ENCODE measurements at regions of chr6 and their contacts with region 1.

Region 1: GRCh38 chr6:113564371-113565161 is 292.6 kb upstream of the MARCKS start:
- DNase-seq: peak; percentile 92
- ATAC-seq: peak; percentile 83
- H3K4me3 ChIP-seq: 0 out of 2 replicates have a peak overlapping the region, but pooled peaks have one; percentile 0
- H3K27ac ChIP-seq: peak overlapping the region; percentile 74
- H3K4me1 ChIP-seq: peaks cover 4% of the 10 kb centered on the region
- H3K27me3 ChIP-seq: no peaks in the 10 kb centered on the region
- CTCF ChIP-seq: no peak
- POLR2A ChIP-seq: no peak
- RAD21 ChIP-seq: no peak; the same call in 1 of the 2 replicates

Region 2: DNA sequence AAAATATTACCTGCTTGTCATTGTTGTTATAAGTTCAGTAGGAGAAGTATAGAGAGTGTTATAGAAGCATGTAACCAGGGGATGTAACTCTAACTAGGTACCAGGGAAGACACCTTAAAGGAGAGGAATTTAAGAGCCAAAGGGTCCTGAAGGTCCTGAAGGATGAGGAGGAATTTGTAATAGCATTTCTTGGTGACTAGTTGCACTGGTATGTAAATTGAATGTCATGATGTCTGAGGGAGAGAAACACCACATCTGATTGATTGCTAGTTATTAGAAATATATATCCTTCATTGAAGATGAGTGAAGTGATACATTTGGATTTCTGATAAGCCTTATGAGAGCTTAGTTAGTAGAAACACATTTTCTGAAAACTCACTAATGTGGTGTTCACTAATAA is 573.6 kb before region 1 on chr6:
- CTCF ChIA-PET with region 1: no interaction called
- POLR2A ChIA-PET with region 1: no interaction called
- dilution Hi-C with region 1: no loop called
- in situ Hi-C with region 1: no loop called
- intact Hi-C with region 1: no loop called
- DNase-seq: peak; percentile 44
- ATAC-seq: peak; percentile 42
- H3K4me3 ChIP-seq: no peak overlapping the region
- H3K27ac ChIP-seq: no peak overlapping the region
- H3K4me1 ChIP-seq: no peaks in the 10 kb centered on the region
- H3K27me3 ChIP-seq: no peaks in the 10 kb centered on the region
- CTCF ChIP-seq: no peak
- POLR2A ChIP-seq: no peak
- RAD21 ChIP-seq: no peak

Region 3: GRCh38 chr6:113433335-113433991 is 131.1 kb before region 1 on chr6:
- CTCF ChIA-PET with region 1: no interaction called
- POLR2A ChIA-PET with region 1: no interaction called
- dilution Hi-C with region 1: no loop called
- in situ Hi-C with region 1: no loop called
- intact Hi-C with region 1: loop called (anchors 2 kb)
- DNase-seq: peak; percentile 83
- ATAC-seq: peak; percentile 75
- H3K4me3 ChIP-seq: no peak overlapping the region
- H3K27ac ChIP-seq: peak overlapping the region; percentile 56; the same call in 1 of the 2 replicates
- H3K4me1 ChIP-seq: peaks cover 8% of the 10 kb centered on the region
- H3K27me3 ChIP-seq: no peaks in the 10 kb centered on the region
- CTCF ChIP-seq: no peak
- POLR2A ChIP-seq: no peak
- RAD21 ChIP-seq: no peak

Region 4: GRCh38 chr6:113530803-113531202 is 33.8 kb before region 1 on chr6:
- CTCF ChIA-PET with region 1: no interaction called
- POLR2A ChIA-PET with region 1: no interaction called
- dilution Hi-C with region 1: no loop called
- in situ Hi-C with region 1: no loop called
- intact Hi-C with region 1: no loop called
- DNase-seq: peak; percentile 92
- ATAC-seq: peak; percentile 99
- H3K4me3 ChIP-seq: no peak overlapping the region
- H3K27ac ChIP-seq: no peak overlapping the region
- H3K4me1 ChIP-seq: no peaks in the 10 kb centered on the region
- H3K27me3 ChIP-seq: no peaks in the 10 kb centered on the region
- CTCF ChIP-seq: no peak
- POLR2A ChIP-seq: no peak
- RAD21 ChIP-seq: no peak

Region 5: GRCh38 chr6:113591896-113592827 is 27.6 kb after region 1 on chr6:
- CTCF ChIA-PET with region 1: no interaction called
- POLR2A ChIA-PET with region 1: no interaction called
- dilution Hi-C with region 1: no loop called
- in situ Hi-C with region 1: no loop called
- intact Hi-C with region 1: no loop called
- DNase-seq: peak; percentile 31
- ATAC-seq: no peak
- H3K4me3 ChIP-seq: no peak overlapping the region
- H3K27ac ChIP-seq: no peak overlapping the region
- H3K4me1 ChIP-seq: peaks cover 13% of the 10 kb centered on the region
- H3K27me3 ChIP-seq: no peaks in the 10 kb centered on the region; the same call in 1 of the 2 replicates
- CTCF ChIP-seq: no peak
- POLR2A ChIP-seq: no peak
- RAD21 ChIP-seq: no peak

Region 6: DNA sequence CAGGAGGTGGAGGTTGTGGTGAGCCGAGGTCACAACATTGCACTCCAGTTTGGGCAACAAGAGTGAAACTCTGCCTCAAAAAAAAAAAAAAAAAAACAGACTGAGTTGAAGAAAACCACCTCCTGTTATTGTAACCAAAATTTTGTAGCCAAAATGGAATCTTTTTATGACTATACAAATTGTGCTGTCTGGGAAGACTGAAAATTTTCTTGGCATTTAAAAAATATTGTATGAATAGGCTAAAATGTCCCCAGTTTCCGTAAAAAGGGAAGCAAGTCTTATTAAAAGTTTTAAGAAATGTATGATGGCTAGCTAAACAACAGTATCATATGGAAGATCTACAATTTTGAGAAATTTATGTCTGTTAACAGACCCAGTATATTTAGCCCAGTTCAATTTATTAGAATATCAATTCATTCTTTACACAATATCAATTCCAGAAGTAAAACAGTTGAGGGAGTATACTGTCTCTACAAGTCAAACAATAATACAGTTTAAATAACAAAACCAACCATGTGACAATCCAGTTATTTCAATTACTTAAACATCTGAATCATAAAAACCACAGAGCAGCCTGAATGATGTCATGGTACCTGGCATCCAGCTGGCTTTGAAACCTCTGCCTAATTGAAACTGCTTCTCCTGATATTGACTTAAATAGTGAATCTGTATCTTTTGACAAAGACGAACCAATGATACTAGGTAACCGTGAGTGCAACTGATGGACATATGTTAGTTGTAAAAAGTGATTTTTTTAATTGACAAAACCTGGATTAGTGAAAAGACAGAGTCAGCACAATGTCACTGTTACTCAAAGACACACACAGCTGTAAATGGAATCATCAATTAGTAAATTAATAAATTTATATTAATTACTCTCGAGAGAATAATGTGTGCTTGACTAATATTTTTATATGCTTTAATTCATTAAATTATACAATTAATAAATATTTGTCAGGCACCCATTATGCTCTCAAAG is 126.0 kb after region 1 on chr6:
- CTCF ChIA-PET with region 1: no interaction called
- POLR2A ChIA-PET with region 1: no interaction called
- dilution Hi-C with region 1: no loop called
- in situ Hi-C with region 1: no loop called
- intact Hi-C with region 1: loop called (anchors 10 kb)
- DNase-seq: peak; percentile 94
- ATAC-seq: peak; percentile 85
- H3K4me3 ChIP-seq: no peak overlapping the region
- H3K27ac ChIP-seq: no peak overlapping the region
- H3K4me1 ChIP-seq: peaks cover 5% of the 10 kb centered on the region
- H3K27me3 ChIP-seq: peaks cover 14% of the 10 kb centered on the region; the same call in 1 of the 2 replicates
- CTCF ChIP-seq: no peak
- POLR2A ChIP-seq: no peak
- RAD21 ChIP-seq: no peak

Measured in IMR-90 (cell line).